Right cardiac atrium (tissue), 5 donors: ENCODE measurements at regions of chr9 and their contacts with region 1.

Region 1: GRCh38 chr9:15606643-15607472 is 54.0 kb downstream of the CCDC171 start:
- DNase-seq: no peak
- ATAC-seq: no peak
- H3K4me3 ChIP-seq: no peak overlapping the region
- H3K27ac ChIP-seq: no peak overlapping the region
- H3K4me1 ChIP-seq: no peaks in the 10 kb centered on the region
- H3K27me3 ChIP-seq: no peaks in the 10 kb centered on the region

Region 2: GRCh38 chr9:15277400-15278090 is 329.3 kb before region 1 on chr9:
- intact Hi-C with region 1: loop called in 3 of 4 experiments (anchors 5 to 10 kb)
- DNase-seq: no peak
- ATAC-seq: peak; percentile 16 to 48
- H3K4me3 ChIP-seq: no peak overlapping the region
- H3K27ac ChIP-seq: no peak overlapping the region
- H3K4me1 ChIP-seq: no peaks in the 10 kb centered on the region
- H3K27me3 ChIP-seq: no peaks in the 10 kb centered on the region

Region 3: DNA sequence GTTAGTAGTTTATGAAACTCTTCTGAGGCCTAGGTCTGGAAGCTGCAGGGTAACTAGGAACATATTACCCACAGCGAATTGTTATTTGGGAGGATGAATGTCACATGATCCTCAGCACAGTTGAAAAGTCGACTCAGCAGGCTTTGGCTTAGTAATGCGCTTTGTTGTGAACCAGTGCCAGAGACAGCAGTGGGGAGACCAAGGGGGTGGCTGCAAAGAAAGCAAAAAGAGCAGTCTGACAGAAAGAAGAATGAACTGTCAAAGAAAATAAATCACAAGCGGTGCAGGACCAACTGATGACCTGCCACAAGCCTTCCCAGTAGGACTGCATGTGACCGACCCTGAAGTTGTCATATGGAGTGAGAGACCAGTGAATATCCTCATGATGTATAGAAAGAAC is 116.0 kb after region 1 on chr9:
- intact Hi-C with region 1: no loop called
- DNase-seq: no peak
- ATAC-seq: no peak
- H3K4me3 ChIP-seq: no peak overlapping the region
- H3K27ac ChIP-seq: no peak overlapping the region
- H3K4me1 ChIP-seq: no peaks in the 10 kb centered on the region
- H3K27me3 ChIP-seq: no peaks in the 10 kb centered on the region

Region 4: GRCh38 chr9:16252616-16253015 is 645.8 kb after region 1 on chr9:
- intact Hi-C with region 1: no loop called
- DNase-seq: no peak
- ATAC-seq: no peak
- H3K4me3 ChIP-seq: no peak overlapping the region
- H3K27ac ChIP-seq: no peak overlapping the region
- H3K4me1 ChIP-seq: no peaks in the 10 kb centered on the region
- H3K27me3 ChIP-seq: no peaks in the 10 kb centered on the region